ENCODE measurements at regions of chr3 and their contacts with region 1.

Region 1: GRCh38 chr3:48439820-48440589 is at the starts of genes CCDC51 and TMA7:
- DNase-seq: peak; percentile 99
- ATAC-seq: peak; percentile 98
- H3K4me3 Mint-ChIP-seq: peak within 1 kb of the TSS; percentile 89
- H3K27ac Mint-ChIP-seq: peak within 1 kb of the TSS; percentile 97
- H3K4me1 Mint-ChIP-seq: peaks cover 30% of the 10 kb centered on the region
- H3K27me3 Mint-ChIP-seq: no peaks in the 10 kb centered on the region
- CTCF ChIP-seq: no peak
- total RNA-seq, gene CCDC51: 25.3 to 28.3 TPM
- total RNA-seq, gene TMA7: 312 to 334 TPM

Region 2: GRCh38 chr3:48188266-48189201 is 251.5 kb before region 1 on chr3 and contains the start of gene CDC25A:
- CTCF ChIA-PET with region 1: interaction called, 11 read pairs
- POLR2A ChIA-PET with region 1: no interaction called
- intact Hi-C with region 1: no loop called
- DNase-seq: peak; percentile 98
- ATAC-seq: peak; percentile 99
- H3K4me3 Mint-ChIP-seq: peak within 1 kb of the TSS; percentile 97
- H3K27ac Mint-ChIP-seq: peak within 1 kb of the TSS; percentile 86
- H3K4me1 Mint-ChIP-seq: peaks cover 18% of the 10 kb centered on the region
- H3K27me3 Mint-ChIP-seq: peaks cover 8% of the 10 kb centered on the region
- CTCF ChIP-seq: no peak
- total RNA-seq, gene CDC25A: 34.1 to 38.4 TPM

Region 3: DNA sequence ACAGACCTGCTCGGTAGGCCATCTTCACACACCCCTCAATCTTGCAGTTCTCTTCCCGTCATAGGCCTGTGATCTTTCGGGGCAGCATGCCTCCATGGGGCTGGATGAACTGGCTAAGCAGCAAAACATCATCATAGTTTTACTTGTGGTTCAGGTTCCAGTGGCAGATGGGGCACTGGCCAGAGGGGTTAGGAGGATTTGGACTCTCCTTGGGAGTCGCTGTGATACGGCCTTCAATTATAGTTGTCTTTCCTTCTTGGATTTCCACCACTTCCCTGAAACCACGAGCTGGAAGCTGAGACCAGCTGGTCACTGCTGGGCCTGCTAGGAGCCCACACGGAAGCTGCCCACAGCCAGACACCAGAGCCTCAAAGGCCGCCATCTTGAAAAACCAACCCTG is 183.4 kb before region 1 on chr3:
- CTCF ChIA-PET with region 1: interaction called, 19 read pairs
- POLR2A ChIA-PET with region 1: no interaction called
- intact Hi-C with region 1: no loop called
- DNase-seq: no peak
- ATAC-seq: no peak
- H3K4me3 Mint-ChIP-seq: no peak overlapping the region
- H3K27ac Mint-ChIP-seq: peak overlapping the region; percentile 38
- H3K4me1 Mint-ChIP-seq: peaks cover 5% of the 10 kb centered on the region
- H3K27me3 Mint-ChIP-seq: no peaks in the 10 kb centered on the region
- CTCF ChIP-seq: no peak

Region 4: GRCh38 chr3:48320996-48321395 is 119.0 kb before region 1 on chr3:
- CTCF ChIA-PET with region 1: interaction called, 14 read pairs
- POLR2A ChIA-PET with region 1: no interaction called
- intact Hi-C with region 1: no loop called
- DNase-seq: no peak
- ATAC-seq: peak; percentile 51
- H3K4me3 Mint-ChIP-seq: no peak overlapping the region
- H3K27ac Mint-ChIP-seq: peak overlapping the region; percentile 80
- H3K4me1 Mint-ChIP-seq: peaks cover 11% of the 10 kb centered on the region
- H3K27me3 Mint-ChIP-seq: no peaks in the 10 kb centered on the region
- CTCF ChIP-seq: no peak

Region 5: GRCh38 chr3:48408823-48409281 is 31.2 kb before region 1 on chr3:
- CTCF ChIA-PET with region 1: interaction called, 312 read pairs
- POLR2A ChIA-PET with region 1: no interaction called
- intact Hi-C with region 1: loop called (anchors 5 kb)
- DNase-seq: no peak
- ATAC-seq: peak; percentile 42
- H3K4me3 Mint-ChIP-seq: no peak overlapping the region
- H3K27ac Mint-ChIP-seq: no peak overlapping the region
- H3K4me1 Mint-ChIP-seq: no peaks in the 10 kb centered on the region
- H3K27me3 Mint-ChIP-seq: no peaks in the 10 kb centered on the region
- CTCF ChIP-seq: peak; percentile 26

Region 6: DNA sequence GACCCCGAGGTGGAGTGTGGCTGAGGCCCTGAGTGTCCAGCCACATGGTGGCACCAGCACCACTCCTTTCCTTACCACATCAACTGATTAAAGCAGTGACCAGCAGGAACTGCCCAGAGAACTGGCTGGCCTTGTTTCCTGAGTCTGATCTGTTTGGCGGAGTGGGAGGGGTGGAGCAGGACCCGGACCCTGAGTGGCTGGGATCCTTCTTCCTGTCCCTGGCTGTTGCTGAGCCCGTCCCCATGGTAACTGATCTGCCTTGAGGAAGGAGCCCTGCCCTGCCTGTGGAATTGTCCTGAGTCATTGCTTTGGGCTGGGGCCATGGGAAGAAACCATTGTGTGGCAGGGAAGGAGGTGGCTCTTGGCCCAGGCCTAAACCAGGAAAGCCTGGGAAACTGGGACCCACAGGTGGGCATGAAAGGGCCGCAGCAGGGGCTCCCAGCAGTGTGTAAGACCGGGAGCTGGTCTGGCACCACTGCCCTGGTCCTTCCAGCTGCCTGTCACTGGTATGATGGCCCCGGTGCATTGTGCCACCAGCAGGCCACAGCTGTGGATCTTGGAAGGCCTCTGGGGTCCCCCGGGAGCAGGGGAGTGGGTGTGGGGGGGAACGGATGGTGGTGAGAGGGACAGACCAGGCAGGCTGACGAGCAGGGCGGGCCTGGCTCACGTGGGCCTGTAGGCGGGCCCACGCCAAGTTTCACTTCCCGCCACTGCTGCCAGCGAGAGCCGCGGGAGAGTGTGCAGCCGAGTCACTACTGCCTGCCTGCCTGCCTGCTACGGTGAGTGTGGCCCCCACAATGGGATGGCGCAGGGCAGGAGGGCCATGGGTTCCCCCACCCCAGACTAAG is 25.8 kb after region 1 on chr3:
- CTCF ChIA-PET with region 1: interaction called, 35 read pairs
- POLR2A ChIA-PET with region 1: interaction called, 32 read pairs
- intact Hi-C with region 1: no loop called
- DNase-seq: peak; percentile 88
- ATAC-seq: peak; percentile 90
- H3K4me3 Mint-ChIP-seq: peak overlapping the region; percentile 87
- H3K27ac Mint-ChIP-seq: peak overlapping the region; percentile 96
- H3K4me1 Mint-ChIP-seq: peaks cover 40% of the 10 kb centered on the region
- H3K27me3 Mint-ChIP-seq: no peaks in the 10 kb centered on the region
- CTCF ChIP-seq: no peak

Region 7: GRCh38 chr3:48548729-48549705 is 109.0 kb after region 1 on chr3:
- CTCF ChIA-PET with region 1: interaction called, 116 read pairs
- POLR2A ChIA-PET with region 1: interaction called, 5 read pairs
- intact Hi-C with region 1: no loop called
- DNase-seq: peak; percentile 89
- ATAC-seq: peak; percentile 98
- H3K4me3 Mint-ChIP-seq: no peak overlapping the region
- H3K27ac Mint-ChIP-seq: no peak overlapping the region
- H3K4me1 Mint-ChIP-seq: peaks cover 8% of the 10 kb centered on the region
- H3K27me3 Mint-ChIP-seq: no peaks in the 10 kb centered on the region
- CTCF ChIP-seq: peak; percentile 92

Measured in activated CD8-positive, alpha-beta T cell treated with anti-CD3 and anti-CD28 coated beads for 36 hours (primary cell).